ENCODE measurements at regions of chr16 and their contacts with region 1.

Region 1: GRCh38 chr16:87316923-87317749 is at the start of gene C16orf95:
- DNase-seq: peak; percentile 96
- H3K4me3 Mint-ChIP-seq: peak within 1 kb of the TSS; percentile 92
- H3K27ac Mint-ChIP-seq: peak within 1 kb of the TSS; percentile 98
- H3K4me1 Mint-ChIP-seq: peaks cover 21% of the 10 kb centered on the region
- H3K27me3 Mint-ChIP-seq: no peaks in the 10 kb centered on the region
- total RNA-seq, gene C16orf95: 7.3 to 9.2 TPM

Region 2: GRCh38 chr16:87332150-87332549 is 15.0 kb after region 1 on chr16:
- CTCF ChIA-PET with region 1: interaction called, 21 read pairs
- POLR2A ChIA-PET with region 1: no interaction called
- DNase-seq: no peak
- H3K4me3 Mint-ChIP-seq: no peak overlapping the region
- H3K27ac Mint-ChIP-seq: no peak overlapping the region
- H3K4me1 Mint-ChIP-seq: peaks cover 3% of the 10 kb centered on the region
- H3K27me3 Mint-ChIP-seq: no peaks in the 10 kb centered on the region